Vagina (tissue), 2 donors: ENCODE measurements at regions of chr3 and their contacts with region 1.

Region 1: DNA sequence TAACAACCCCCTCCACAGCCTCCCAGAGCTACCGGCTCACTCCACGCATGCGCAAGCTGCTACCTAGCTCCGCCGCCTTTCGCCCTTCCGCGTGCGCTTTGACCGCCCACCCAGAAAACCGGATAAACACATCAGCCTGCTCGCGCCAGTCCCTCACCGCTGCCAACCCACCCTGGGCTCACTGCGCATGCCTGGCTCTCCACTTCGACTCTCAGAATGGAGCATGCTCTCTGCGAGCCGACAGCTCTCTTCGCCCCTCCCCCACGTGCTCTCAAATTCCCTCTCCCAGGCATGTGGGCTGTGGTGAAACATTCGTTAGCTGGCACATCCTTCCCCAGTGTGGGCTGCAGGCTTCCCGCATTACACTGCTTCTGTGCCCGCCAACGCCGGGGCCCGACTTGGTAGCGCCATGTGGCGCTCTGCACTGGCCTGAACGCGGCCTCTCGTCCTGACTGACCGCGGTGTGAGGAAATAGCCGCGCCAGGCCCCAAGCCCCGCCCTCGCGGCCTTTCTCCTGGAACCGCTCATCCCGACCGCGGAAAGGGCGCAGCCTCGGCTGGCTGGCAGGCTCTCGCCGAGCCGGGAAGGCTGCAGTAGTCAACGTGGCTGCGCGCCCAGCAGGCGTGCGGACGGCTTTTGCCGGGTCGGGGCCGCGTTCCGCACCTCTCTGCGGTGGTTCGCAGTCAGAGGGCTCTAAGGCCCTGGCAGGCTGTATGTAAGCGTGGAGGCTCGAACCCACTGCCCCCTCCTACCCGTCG is 445 bp upstream of the MSL2 start:
- DNase-seq: peak; percentile 98 to 99
- H3K4me3 ChIP-seq: peak overlapping the region; percentile 89 to 94
- H3K27ac ChIP-seq: peak overlapping the region; percentile 100
- H3K4me1 ChIP-seq: peaks cover 30% of the 10 kb centered on the region
- H3K27me3 ChIP-seq: no peaks in the 10 kb centered on the region
- CTCF ChIP-seq: no peak
- POLR2A ChIP-seq: peak in 1 of 2 donors; percentile 44

Region 2: DNA sequence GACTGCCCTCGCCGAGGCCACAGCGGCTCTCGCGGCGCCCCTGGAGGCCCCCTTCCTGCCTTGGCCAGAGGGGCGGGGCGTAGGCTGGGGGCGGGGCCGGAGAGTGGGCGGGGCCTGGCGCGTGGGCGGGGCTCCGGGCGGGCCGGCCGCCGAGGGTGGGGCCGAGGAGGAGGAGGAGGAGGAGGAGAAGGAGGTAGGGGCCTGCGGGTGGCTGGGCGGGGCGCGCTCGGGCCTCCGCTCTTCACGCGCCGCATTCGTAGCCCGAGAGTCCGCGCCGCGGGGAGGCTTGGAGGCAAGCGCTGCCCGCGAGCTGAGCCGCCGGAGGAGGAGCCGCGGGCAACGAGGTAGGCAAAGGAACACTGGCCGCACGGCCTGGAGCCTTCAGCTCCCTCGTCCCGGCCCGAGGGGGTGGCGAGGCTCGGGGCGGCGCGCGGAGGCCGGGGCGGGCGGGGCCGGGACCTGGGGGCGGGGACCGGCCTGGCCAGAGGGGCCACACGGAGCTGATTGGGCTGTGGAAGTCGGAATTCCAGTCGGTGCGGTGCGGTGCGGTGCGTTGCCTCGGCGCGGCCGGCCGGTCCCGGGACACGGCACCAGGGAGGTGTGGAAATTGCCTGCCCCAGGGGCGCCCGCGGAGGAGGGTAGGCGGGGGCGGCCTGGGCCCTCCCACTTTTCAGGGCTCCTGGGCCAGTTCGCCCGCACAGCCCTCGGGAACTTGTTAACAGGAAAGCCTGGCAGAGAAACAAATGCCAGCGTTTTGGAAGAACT is 230.9 kb before region 1 on chr3 and contains the start of gene PPP2R3A:
- intact Hi-C with region 1: loop called (anchors 10 kb)
- DNase-seq: peak in 1 of 2 donors; percentile 91
- H3K4me3 ChIP-seq: peak within 1 kb of the TSS; percentile 59 to 92
- H3K27ac ChIP-seq: peak within 1 kb of the TSS; percentile 94
- H3K4me1 ChIP-seq: peaks cover 42% of the 10 kb centered on the region
- H3K27me3 ChIP-seq: no peaks in the 10 kb centered on the region
- CTCF ChIP-seq: no peak
- POLR2A ChIP-seq: peak in 1 of 2 donors; percentile 38
- total RNA-seq, gene PPP2R3A: 15.5 TPM